ENCODE measurements at regions of chr17 and their contacts with region 1.

Region 1: DNA sequence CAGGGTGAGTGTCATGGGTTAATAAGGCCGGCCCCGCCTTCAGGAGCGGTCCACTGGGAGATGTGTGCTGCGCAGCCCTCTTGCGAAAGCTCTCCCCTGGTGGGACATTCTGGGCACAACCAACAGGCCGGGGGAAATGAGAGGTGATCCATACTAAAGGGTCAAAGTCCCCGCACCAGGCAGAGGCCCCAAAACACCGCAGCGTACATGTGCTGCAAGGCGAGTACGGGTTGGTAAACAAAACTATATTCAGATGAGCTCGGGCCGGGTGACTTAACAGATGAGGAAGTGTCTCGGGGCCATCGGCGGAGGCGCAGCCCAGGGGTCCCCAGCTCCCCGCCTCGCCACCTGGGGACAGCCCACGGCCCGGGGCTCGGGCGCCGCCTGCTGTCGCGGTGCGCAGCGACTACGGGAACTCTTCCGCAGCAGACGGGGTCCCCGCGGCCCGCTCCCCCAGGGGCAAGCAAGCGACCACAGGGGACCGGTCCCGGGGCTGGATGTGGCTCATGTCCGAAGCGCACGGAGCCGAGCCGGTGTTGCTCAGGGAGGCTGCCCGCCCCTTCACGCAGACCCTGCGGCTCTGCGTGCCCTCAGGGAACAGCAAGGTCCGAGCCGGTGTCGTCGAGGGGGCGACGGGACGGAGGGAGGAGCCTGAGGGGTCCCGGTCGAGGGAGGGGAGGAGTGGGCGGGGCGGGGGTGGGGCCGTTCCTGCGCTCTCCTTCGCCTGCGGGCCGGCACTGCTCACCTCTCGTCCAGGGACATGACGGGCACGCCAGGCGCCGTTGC is at the start of gene RAB37:
- DNase-seq: no peak
- ATAC-seq: peak; percentile 57
- H3K4me3 ChIP-seq: peak within 1 kb of the TSS; percentile 28 to 53
- H3K27ac ChIP-seq: no peak within 1 kb of the TSS
- H3K4me1 ChIP-seq: peaks cover 7% of the 10 kb centered on the region
- H3K27me3 ChIP-seq: 0 out of 2 replicates have a peak, but pooled peaks cover 3% of the 10 kb centered on the region
- CTCF ChIP-seq: peak; percentile 85
- total RNA-seq, gene RAB37: 1.5 TPM

Region 2: GRCh38 chr17:74566132-74566753 is 170.5 kb before region 1 on chr17:
- CTCF ChIA-PET with region 1: interaction called, 3 read pairs
- POLR2A ChIA-PET with region 1: no interaction called
- in situ Hi-C with region 1: no loop called
- intact Hi-C with region 1: loop called (anchors 5 kb)
- DNase-seq: peak; percentile 27
- ATAC-seq: peak; percentile 58
- H3K4me3 ChIP-seq: no peak overlapping the region
- H3K27ac ChIP-seq: no peak overlapping the region
- H3K4me1 ChIP-seq: peaks cover 11% of the 10 kb centered on the region; the same call in 1 of the 2 replicates
- H3K27me3 ChIP-seq: peaks cover 4% of the 10 kb centered on the region; the same call in 1 of the 2 replicates
- CTCF ChIP-seq: peak; percentile 92

Region 3: GRCh38 chr17:74597069-74597790 is 139.5 kb before region 1 on chr17:
- CTCF ChIA-PET with region 1: no interaction called
- POLR2A ChIA-PET with region 1: no interaction called
- in situ Hi-C with region 1: no loop called
- intact Hi-C with region 1: no loop called
- DNase-seq: no peak
- ATAC-seq: no peak
- H3K4me3 ChIP-seq: no peak overlapping the region
- H3K27ac ChIP-seq: no peak overlapping the region
- H3K4me1 ChIP-seq: no peaks in the 10 kb centered on the region
- H3K27me3 ChIP-seq: no peaks in the 10 kb centered on the region; the same call in 1 of the 2 replicates
- CTCF ChIP-seq: no peak

Region 4: GRCh38 chr17:74682471-74683190 is 54.1 kb before region 1 on chr17:
- CTCF ChIA-PET with region 1: interaction called, 11 read pairs
- POLR2A ChIA-PET with region 1: no interaction called
- in situ Hi-C with region 1: no loop called
- intact Hi-C with region 1: no loop called
- DNase-seq: no peak
- ATAC-seq: no peak
- H3K4me3 ChIP-seq: no peak overlapping the region
- H3K27ac ChIP-seq: no peak overlapping the region
- H3K4me1 ChIP-seq: no peaks in the 10 kb centered on the region
- H3K27me3 ChIP-seq: peaks cover 7% of the 10 kb centered on the region
- CTCF ChIP-seq: no peak

Region 5: GRCh38 chr17:75087558-75088453 is 351.1 kb after region 1 on chr17 and contains the start of gene SLC16A5:
- CTCF ChIA-PET with region 1: no interaction called
- POLR2A ChIA-PET with region 1: interaction called, 16 read pairs
- in situ Hi-C with region 1: no loop called
- intact Hi-C with region 1: no loop called
- DNase-seq: no peak
- ATAC-seq: peak; percentile 85
- H3K4me3 ChIP-seq: peak within 1 kb of the TSS; percentile 56 to 76
- H3K27ac ChIP-seq: peak within 1 kb of the TSS; percentile 93
- H3K4me1 ChIP-seq: peaks cover 57% of the 10 kb centered on the region
- H3K27me3 ChIP-seq: no peaks in the 10 kb centered on the region
- CTCF ChIP-seq: no peak
- total RNA-seq, gene SLC16A5: 46.6 TPM

Measured in Panc1 (cell line).